ENCODE measurements at regions of chr15 and their contacts with region 1.

Region 1: DNA sequence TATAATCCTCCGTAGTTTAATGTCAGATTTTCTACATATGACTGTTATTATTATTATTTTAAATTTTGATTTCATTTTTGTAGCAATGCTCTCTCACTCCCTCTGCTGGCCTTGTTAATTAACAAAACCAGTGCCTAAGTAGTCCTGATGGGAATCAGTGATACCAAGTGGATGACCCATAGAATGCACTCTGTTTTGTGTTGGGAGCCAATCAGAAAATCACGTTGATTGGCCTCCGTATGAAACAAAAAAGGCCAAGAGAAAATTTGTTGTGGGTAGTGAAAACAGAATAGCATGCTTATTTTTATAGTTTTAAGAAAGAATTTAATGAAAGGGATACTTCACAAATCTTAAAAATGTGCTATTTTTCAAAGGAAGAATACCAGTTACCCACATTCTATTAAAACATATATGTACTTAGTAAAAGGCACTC is 34.4 kb upstream of the MEIS2 start:
- DNase-seq: no peak
- ATAC-seq: peak; percentile 64 to 75
- H3K4me3 ChIP-seq: no peak overlapping the region
- H3K27ac ChIP-seq: no peak overlapping the region
- H3K4me1 ChIP-seq: no peaks in the 10 kb centered on the region
- H3K27me3 ChIP-seq: no peaks in the 10 kb centered on the region

Region 2: GRCh38 chr15:36501063-36501678 is 633.5 kb before region 1 on chr15:
- intact Hi-C with region 1: loop called in 1 of 4 experiments (anchors 10 kb)
- DNase-seq: no peak
- ATAC-seq: peak; percentile 88 to 96
- H3K4me3 ChIP-seq: no peak overlapping the region
- H3K27ac ChIP-seq: no peak overlapping the region
- H3K4me1 ChIP-seq: no peaks in the 10 kb centered on the region
- H3K27me3 ChIP-seq: no peaks in the 10 kb centered on the region

Region 3: GRCh38 chr15:36883713-36884517 is 250.8 kb before region 1 on chr15:
- intact Hi-C with region 1: loop called (anchors 2 to 10 kb)
- DNase-seq: peak; percentile 89 to 95 (median 94)
- ATAC-seq: peak; percentile 89 to 92
- H3K4me3 ChIP-seq: peak overlapping the region; percentile 58
- H3K27ac ChIP-seq: no peak overlapping the region
- H3K4me1 ChIP-seq: peaks cover 8% of the 10 kb centered on the region
- H3K27me3 ChIP-seq: no peaks in the 10 kb centered on the region